Right cardiac atrium (tissue), 5 donors: ENCODE measurements at regions of chr4 and their contacts with region 1.

Region 1: DNA sequence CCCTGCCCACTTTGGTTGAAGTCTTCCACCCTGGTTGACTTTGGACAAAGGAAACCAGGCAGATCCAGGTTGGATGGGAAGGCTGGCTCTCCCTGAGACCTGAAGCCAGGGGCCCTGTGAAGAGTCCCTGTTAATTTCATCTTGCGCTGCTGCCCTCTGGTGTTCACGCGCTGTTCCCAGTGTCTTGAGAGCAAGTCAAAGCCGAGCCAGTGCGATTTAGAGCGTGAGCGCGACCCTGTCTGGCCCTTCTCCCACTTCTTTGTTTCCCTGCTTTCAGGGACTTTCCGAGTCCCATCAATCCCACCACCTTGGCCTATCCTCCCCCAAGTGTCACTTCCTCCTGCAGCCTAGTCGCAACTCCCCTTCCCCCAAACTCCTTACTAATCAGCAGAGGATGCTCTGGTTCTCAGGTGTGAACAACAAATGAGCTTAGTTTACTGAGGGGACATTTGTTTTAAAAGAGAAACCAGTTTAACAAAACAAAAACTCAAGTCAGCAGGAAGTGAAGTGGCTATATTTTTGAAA is 25.8 kb upstream of the CHRNA9 start:
- DNase-seq: peak; percentile 87 to 97 (median 93)
- ATAC-seq: peak; percentile 82 to 87
- H3K4me3 ChIP-seq: no peak overlapping the region
- H3K27ac ChIP-seq: no peak overlapping the region
- H3K4me1 ChIP-seq: no peaks in the 10 kb centered on the region
- H3K27me3 ChIP-seq: no peaks in the 10 kb centered on the region

Region 2: GRCh38 chr4:40056716-40057585 is 252.4 kb before region 1 on chr4 and contains the start of gene N4BP2:
- intact Hi-C with region 1: loop called in 2 of 4 experiments (anchors 5 kb)
- DNase-seq: peak; percentile 88 to 96 (median 95)
- ATAC-seq: peak; percentile 88 to 90
- H3K4me3 ChIP-seq: peak within 1 kb of the TSS; percentile 74
- H3K27ac ChIP-seq: peak within 1 kb of the TSS; percentile 97
- H3K4me1 ChIP-seq: no peaks in the 10 kb centered on the region
- H3K27me3 ChIP-seq: no peaks in the 10 kb centered on the region
- total RNA-seq, gene N4BP2: 5.6 to 7.3 (median 6.2) TPM

Region 3: GRCh38 chr4:40149960-40150385 is 159.3 kb before region 1 on chr4:
- intact Hi-C with region 1: loop called (anchors 5 to 10 kb)
- DNase-seq: peak in 2 of 3 donors; percentile 23 to 62
- ATAC-seq: peak; percentile 55 to 68
- H3K4me3 ChIP-seq: no peak overlapping the region
- H3K27ac ChIP-seq: no peak overlapping the region
- H3K4me1 ChIP-seq: no peaks in the 10 kb centered on the region
- H3K27me3 ChIP-seq: no peaks in the 10 kb centered on the region

Region 4: DNA sequence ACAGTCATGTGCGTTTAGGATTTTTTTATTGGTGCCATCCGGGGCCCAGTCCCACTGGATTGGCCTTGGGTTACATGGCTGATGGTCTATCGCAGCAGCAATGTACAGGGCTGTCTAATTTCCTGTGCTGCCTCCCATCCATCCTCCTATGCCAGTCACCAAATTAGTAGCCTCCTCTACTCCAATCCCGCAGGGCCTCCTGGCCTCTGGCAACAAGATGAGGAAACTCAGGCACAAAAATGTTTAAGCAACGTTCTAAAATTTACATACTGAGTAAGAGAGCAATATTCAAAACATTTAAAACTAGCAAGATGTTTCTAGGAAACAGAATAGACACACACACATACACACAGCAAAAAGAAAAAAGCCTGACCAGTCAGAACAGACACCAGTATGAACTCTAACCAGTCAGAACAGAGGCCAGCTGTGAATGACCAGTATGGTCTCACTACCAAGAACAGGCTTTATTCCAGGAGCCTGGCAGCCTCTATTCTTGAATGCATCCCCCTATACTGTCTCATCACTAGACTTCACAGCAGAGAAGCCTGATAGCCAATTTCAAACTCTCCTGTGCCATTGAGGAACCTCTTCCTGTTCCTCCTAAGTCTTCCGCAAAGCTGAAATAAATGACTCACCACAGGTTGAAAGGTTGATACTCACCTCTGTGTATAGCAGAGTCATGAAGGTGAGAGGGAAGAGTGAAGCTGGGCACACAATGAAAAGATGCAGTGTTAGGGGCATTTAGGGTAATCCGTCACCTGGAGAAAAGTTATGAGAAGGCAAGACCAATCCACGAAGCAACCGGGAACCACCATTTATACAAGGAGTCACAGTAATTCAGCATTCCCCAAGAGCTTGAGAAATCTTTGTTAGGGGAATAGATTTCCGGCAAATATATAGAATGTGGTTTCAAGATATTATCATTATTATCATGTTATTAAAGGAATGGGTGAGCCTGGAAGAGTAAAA is 68.6 kb after region 1 on chr4:
- intact Hi-C with region 1: no loop called
- DNase-seq: no peak
- ATAC-seq: no peak
- H3K4me3 ChIP-seq: no peak overlapping the region
- H3K27ac ChIP-seq: no peak overlapping the region
- H3K4me1 ChIP-seq: no peaks in the 10 kb centered on the region
- H3K27me3 ChIP-seq: no peaks in the 10 kb centered on the region